HCT116 (cell line): ENCODE measurements at regions of chr4 and their contacts with region 1.

Region 1: DNA sequence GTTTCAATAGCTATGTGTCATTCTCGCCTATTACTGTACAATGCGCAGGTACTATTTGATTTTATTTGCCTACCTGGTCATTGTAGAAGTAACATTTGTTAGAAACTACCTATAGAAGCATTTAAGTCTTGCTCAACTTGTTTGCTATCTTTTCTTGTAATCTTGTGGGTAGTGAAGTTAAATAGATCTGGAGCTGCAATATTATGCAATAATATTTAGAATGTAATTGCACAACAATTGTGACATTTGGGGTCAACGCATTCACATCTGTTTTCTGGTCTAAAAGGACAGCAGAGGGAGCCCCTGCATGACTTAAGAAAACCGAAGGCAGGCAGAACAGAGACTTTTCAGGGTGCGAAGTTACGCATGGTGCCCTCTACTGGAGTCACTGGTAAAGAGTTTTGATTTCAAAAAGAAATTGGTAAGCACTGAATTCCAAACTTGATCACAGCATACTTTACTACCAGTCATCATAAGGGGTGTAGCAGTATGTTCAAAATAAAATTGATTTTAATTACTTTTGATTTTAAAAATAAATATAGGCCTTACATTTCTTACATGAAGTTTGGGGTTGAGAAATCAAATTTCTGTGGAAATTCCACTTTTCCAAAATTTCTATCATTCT is 503.2 kb upstream of the FAM241A start:
- DNase-seq: peak; percentile 91
- ATAC-seq: peak; percentile 93
- H3K4me3 ChIP-seq: no peak overlapping the region
- H3K27ac ChIP-seq: no peak overlapping the region
- H3K4me1 ChIP-seq: peaks cover 0 to 3% of the 10 kb centered on the region in 2 experiments; a peak in 1 of 4 replicates
- H3K27me3 ChIP-seq: no peaks in the 10 kb centered on the region
- CTCF ChIP-seq: peak; percentile 81 to 99 (median 95)
- POLR2A ChIP-seq: no peak
- RAD21 ChIP-seq: peak; percentile 94

Region 2: GRCh38 chr4:111778543-111778942 is 136.5 kb after region 1 on chr4:
- CTCF ChIA-PET with region 1: interaction called, 7 read pairs
- POLR2A ChIA-PET with region 1: no interaction called
- RAD21 ChIA-PET with region 1: no interaction called
- intact Hi-C with region 1: loop called (anchors 1 kb)
- DNase-seq: peak; percentile 15
- ATAC-seq: peak; percentile 52; the same call in 1 of the 2 replicates
- H3K4me3 ChIP-seq: no peak overlapping the region
- H3K27ac ChIP-seq: no peak overlapping the region
- H3K4me1 ChIP-seq: peaks cover 9 to 27% of the 10 kb centered on the region in 2 experiments; a peak in 3 of 4 replicates
- H3K27me3 ChIP-seq: no peaks in the 10 kb centered on the region
- CTCF ChIP-seq: peak; percentile 30 to 65 (median 46); a peak in 4 of 6 replicates
- POLR2A ChIP-seq: no peak
- RAD21 ChIP-seq: peak; percentile 56

Region 3: DNA sequence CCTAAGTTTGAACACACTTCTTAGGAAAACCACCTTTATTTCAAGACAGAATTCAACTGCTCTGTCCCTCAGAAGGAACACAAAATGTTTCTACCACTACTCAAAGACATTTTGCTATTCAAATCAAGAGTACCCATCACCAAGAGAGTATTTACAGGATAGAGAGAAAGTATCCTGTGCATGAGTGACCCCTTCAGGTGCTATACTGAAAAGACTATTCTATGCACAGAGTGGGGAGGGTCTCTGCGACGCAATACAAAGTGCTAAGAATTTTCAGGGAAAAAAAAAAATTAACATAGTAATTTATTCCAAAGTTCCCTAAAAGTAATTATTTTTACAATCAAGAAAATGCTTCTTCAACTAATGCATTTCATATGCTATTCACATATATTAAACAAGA is 156.8 kb after region 1 on chr4:
- CTCF ChIA-PET with region 1: no interaction called
- POLR2A ChIA-PET with region 1: no interaction called
- RAD21 ChIA-PET with region 1: no interaction called
- intact Hi-C with region 1: loop called (anchors 1 kb)
- DNase-seq: no peak
- ATAC-seq: peak; percentile 64
- H3K4me3 ChIP-seq: no peak overlapping the region
- H3K27ac ChIP-seq: no peak overlapping the region
- H3K4me1 ChIP-seq: no peaks in the 10 kb centered on the region
- H3K27me3 ChIP-seq: no peaks in the 10 kb centered on the region
- CTCF ChIP-seq: peak; percentile 24 to 50 (median 47); a peak in 5 of 6 replicates
- POLR2A ChIP-seq: no peak
- RAD21 ChIP-seq: peak; percentile 38; the same call in 1 of the 2 replicates

Region 4: DNA sequence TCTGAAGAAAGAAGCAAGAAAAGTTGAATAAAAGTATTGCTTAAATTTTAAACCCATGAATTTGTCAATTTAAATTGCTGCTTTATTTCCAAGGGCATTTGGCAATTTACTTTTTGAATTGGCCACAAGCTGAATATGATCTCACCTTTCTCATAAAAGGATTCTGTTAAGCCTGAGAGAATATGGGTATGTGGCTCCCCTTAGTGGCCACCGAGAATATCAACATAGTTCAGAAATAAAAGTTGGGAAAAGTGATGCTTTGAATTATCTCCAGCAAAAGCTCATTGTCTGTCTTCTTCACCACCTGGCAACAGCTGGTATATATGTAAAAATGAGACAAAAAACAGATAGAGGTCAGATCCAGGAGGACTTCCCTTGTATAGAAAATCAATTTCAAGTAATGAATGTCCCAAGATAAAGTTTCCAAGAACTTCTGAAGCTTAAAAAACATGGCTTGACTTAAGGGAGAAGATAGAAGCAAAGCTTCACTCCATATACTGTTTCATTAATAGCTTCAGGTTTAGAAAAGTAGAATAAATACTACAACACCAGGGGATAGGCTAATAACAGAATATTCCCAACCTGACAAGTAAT is 212.5 kb after region 1 on chr4:
- CTCF ChIA-PET with region 1: interaction called, 48 read pairs
- POLR2A ChIA-PET with region 1: no interaction called
- RAD21 ChIA-PET with region 1: interaction called in 1 of 2 experiments, 3 read pairs
- intact Hi-C with region 1: loop called (anchors 1 kb)
- DNase-seq: peak; percentile 39
- ATAC-seq: peak; percentile 82
- H3K4me3 ChIP-seq: no peak overlapping the region
- H3K27ac ChIP-seq: no peak overlapping the region
- H3K4me1 ChIP-seq: no peaks in the 10 kb centered on the region
- H3K27me3 ChIP-seq: no peaks in the 10 kb centered on the region
- CTCF ChIP-seq: peak; percentile 55 to 89 (median 78)
- POLR2A ChIP-seq: no peak
- RAD21 ChIP-seq: peak; percentile 84

Region 5: GRCh38 chr4:111937368-111937767 is 295.3 kb after region 1 on chr4:
- CTCF ChIA-PET with region 1: interaction called, 13 read pairs
- POLR2A ChIA-PET with region 1: no interaction called
- RAD21 ChIA-PET with region 1: no interaction called
- intact Hi-C with region 1: loop called (anchors 1 kb)
- DNase-seq: peak; percentile 48
- ATAC-seq: peak; percentile 88
- H3K4me3 ChIP-seq: no peak overlapping the region
- H3K27ac ChIP-seq: no peak overlapping the region
- H3K4me1 ChIP-seq: 0 out of 4 replicates have a peak, but pooled peaks cover 0 to 3% of the 10 kb centered on the region in 2 experiments
- H3K27me3 ChIP-seq: no peaks in the 10 kb centered on the region
- CTCF ChIP-seq: peak; percentile 31 to 72 (median 68); a peak in 5 of 6 replicates
- POLR2A ChIP-seq: no peak
- RAD21 ChIP-seq: peak; percentile 79

Region 6: DNA sequence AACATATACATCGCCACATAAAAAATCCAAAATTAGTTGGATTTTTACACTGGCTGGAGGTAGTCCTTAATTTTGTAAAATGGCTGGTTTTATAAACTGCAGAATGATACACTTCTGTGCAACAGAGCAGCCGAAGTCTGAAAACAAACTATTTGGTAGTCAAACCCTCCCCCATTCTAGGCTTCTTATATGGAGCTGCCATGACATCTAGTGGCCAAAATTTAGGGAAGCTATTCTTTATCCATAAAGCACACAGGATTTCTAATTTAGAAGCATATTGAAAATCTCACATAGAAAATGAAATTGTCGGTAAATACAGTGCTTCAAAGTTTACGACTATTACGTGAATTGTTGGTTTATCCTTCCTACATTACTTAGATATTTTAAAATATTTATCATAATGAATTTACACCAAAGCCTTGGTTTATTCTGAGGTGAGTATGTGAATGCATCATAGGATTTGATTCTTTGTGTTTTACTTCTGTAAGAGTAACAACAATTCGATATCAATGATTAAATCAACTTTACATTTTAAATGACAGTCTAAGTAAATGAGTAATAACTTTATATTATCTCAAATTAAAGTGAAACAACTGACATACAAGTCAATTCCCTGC is 389.8 kb after region 1 on chr4:
- CTCF ChIA-PET with region 1: interaction called, 14 read pairs
- POLR2A ChIA-PET with region 1: no interaction called
- RAD21 ChIA-PET with region 1: no interaction called
- intact Hi-C with region 1: loop called (anchors 1 kb)
- DNase-seq: peak; percentile 48
- ATAC-seq: peak; percentile 78; the same call in 1 of the 2 replicates
- H3K4me3 ChIP-seq: no peak overlapping the region
- H3K27ac ChIP-seq: no peak overlapping the region
- H3K4me1 ChIP-seq: no peaks in the 10 kb centered on the region
- H3K27me3 ChIP-seq: no peaks in the 10 kb centered on the region
- CTCF ChIP-seq: peak; percentile 59 to 90 (median 83); a peak in 5 of 6 replicates
- POLR2A ChIP-seq: no peak
- RAD21 ChIP-seq: peak; percentile 93

Region 7: DNA sequence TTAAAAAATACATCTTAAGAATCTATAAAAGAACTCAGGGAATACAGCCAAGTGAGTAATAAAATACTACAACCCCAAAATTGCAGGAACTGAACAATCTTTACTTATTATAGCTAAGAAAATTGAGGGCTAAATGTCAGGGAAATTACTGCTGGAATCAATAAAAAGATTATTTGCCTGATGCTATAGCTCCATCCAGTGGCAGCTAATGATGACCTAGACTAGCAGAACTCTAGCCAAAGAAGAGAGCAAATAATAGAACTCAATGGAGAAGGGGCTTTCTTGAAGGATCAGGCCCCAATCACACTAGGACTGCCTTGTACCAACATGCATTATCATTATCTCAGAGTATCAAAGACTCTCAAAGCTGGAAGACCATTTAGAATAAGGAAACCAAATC is 418.1 kb after region 1 on chr4:
- CTCF ChIA-PET with region 1: interaction called, 7 read pairs
- POLR2A ChIA-PET with region 1: no interaction called
- RAD21 ChIA-PET with region 1: no interaction called
- intact Hi-C with region 1: loop called (anchors 2 kb)
- DNase-seq: peak; percentile 33
- ATAC-seq: peak; percentile 81
- H3K4me3 ChIP-seq: no peak overlapping the region
- H3K27ac ChIP-seq: no peak overlapping the region
- H3K4me1 ChIP-seq: peaks cover 0 to 7% of the 10 kb centered on the region in 2 experiments; a peak in 1 of 4 replicates
- H3K27me3 ChIP-seq: no peaks in the 10 kb centered on the region
- CTCF ChIP-seq: peak; percentile 68 to 77 (median 72)
- POLR2A ChIP-seq: no peak
- RAD21 ChIP-seq: peak; percentile 87

Region 8: GRCh38 chr4:112145326-112145819 is 503.3 kb after region 1 on chr4 and contains the start of gene FAM241A:
- CTCF ChIA-PET with region 1: no interaction called
- POLR2A ChIA-PET with region 1: no interaction called
- RAD21 ChIA-PET with region 1: no interaction called
- intact Hi-C with region 1: no loop called
- DNase-seq: peak; percentile 54
- ATAC-seq: peak; percentile 95
- H3K4me3 ChIP-seq: peak within 1 kb of the TSS; percentile 53 to 65
- H3K27ac ChIP-seq: peak within 1 kb of the TSS; percentile 68
- H3K4me1 ChIP-seq: peaks cover 4 to 13% of the 10 kb centered on the region in 2 experiments; a peak in 3 of 4 replicates
- H3K27me3 ChIP-seq: no peaks in the 10 kb centered on the region
- CTCF ChIP-seq: no peak
- POLR2A ChIP-seq: peak; percentile 78
- RAD21 ChIP-seq: no peak
- total RNA-seq, gene FAM241A: 4.5 TPM